Activated CD4-positive, alpha-beta memory T cell treated with anti-CD3 and anti-CD28 coated beads for 36 hours (primary cell): ENCODE measurements at regions of chr9 and their contacts with region 1.

Region 1: DNA sequence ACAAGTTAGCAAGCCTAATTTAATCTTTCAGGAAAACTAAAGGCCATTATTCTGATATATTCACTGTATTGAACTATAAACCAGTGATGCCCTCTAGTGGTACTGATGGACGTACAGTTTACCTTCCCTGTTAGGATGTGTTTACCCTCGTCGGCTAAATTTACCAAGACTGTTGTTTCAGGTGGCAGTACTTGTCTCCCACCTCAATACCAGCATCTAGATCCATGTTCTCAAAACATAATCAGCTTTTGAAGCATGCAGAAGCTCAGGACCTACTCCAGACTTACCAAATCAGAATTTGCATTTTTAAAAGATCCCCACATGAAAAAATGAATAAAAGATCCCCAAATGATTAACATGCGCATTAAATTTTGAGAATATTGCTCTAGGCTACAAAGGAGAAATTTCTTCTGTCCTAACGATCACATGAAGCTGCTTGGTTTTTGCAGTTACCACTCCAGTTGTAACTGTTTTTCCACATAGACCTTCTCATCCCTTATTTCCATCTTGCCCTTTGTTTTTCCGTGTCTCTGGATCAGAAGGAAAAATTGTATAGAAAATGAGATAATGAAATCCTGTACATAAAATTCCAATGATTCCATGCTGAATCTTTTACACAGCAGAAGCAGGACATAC is 3.2 kb upstream of the BAAT start:
- DNase-seq: no peak
- H3K4me3 Mint-ChIP-seq: no peak overlapping the region
- H3K27ac Mint-ChIP-seq: peak overlapping the region; percentile 65
- H3K4me1 Mint-ChIP-seq: peaks cover 22% of the 10 kb centered on the region
- H3K27me3 Mint-ChIP-seq: no peaks in the 10 kb centered on the region

Region 2: DNA sequence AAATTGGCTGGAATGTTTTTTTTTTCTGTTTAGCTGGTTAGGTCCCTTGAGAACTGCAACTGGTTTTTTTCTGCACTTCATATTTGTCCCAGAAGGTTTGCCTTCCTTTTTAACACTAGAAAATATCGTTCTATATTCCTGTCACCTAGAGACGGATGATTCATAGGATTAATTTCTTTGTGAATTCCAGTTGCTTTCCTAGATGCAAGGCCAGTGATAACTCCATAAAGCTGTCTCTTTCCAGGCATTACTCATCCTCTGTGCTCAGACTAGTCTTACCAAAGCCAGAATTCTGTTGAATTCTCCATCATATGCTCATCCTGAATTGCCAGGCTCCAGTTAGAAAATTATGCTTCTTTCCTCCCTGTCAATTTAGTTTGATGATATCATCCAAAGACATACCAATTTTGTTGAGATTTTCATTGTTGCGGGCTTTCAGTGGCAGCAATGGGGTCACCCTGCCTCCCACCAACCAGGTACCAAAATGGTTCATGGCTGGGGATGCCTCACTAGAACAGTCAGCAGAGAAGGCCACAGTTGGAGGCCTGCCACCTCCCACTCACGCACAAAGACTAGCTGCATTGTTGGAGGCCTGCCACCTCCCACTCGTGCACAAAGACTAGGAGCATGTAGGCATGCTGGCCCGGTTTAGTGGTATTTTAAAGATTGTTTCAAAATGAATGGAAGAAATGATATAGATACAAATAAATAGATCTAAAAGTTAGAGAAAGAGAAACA is 11.7 kb before region 1 on chr9:
- CTCF ChIA-PET with region 1: interaction called, 13 read pairs
- POLR2A ChIA-PET with region 1: no interaction called
- intact Hi-C with region 1: no loop called
- DNase-seq: no peak
- H3K4me3 Mint-ChIP-seq: no peak overlapping the region
- H3K27ac Mint-ChIP-seq: no peak overlapping the region
- H3K4me1 Mint-ChIP-seq: no peaks in the 10 kb centered on the region
- H3K27me3 Mint-ChIP-seq: peaks cover 12% of the 10 kb centered on the region